ENCODE measurements at regions of chr1 and their contacts with region 1.

Region 1: DNA sequence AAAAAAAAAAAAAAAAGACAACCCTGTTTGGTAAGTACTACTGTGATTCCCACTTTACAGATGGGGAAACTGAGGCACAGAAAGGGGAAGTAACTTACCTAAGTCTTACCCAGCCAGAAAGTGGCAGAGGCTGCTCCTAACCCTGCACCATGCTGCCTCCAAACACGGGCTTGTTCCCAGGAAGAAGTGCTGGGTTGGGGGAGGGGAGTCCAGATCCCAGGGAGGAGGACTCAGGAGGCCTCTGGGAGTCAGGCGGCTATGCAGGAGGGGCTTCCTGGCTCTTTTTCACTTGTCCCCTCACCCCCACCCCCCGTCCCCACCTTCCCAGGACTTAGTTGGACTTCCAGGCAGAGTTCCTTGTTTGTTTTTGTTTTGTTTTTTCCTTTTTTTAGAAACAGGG is 23.9 kb downstream of the PIK3CD start:
- DNase-seq: no peak
- ATAC-seq: no peak
- H3K4me3 ChIP-seq: no peak overlapping the region
- H3K27ac ChIP-seq: no peak overlapping the region
- H3K4me1 ChIP-seq: peaks cover 0 to 3% (median 0%) of the 10 kb centered on the region in 9 donors
- H3K27me3 ChIP-seq: no peaks in the 10 kb centered on the region
- CTCF ChIP-seq: no peak

Region 2: GRCh38 chr1:9643351-9644256 is 31.8 kb before region 1 on chr1:
- intact Hi-C with region 1: loop called in 1 of 10 experiments (anchors 2 kb)
- DNase-seq: no peak
- ATAC-seq: peak in 1 of 8 donors; percentile 25
- H3K4me3 ChIP-seq: no peak overlapping the region
- H3K27ac ChIP-seq: peak overlapping the region in 1 of 10 donors; percentile 76
- H3K4me1 ChIP-seq: peaks cover 0 to 36% (median 0%) of the 10 kb centered on the region in 9 donors
- H3K27me3 ChIP-seq: peaks cover 0 to 17% (median 3%) of the 10 kb centered on the region in 7 donors
- CTCF ChIP-seq: no peak